Left cardiac atrium (tissue), 4 donors: ENCODE measurements at regions of chr10 and their contacts with region 1.

Region 1: DNA sequence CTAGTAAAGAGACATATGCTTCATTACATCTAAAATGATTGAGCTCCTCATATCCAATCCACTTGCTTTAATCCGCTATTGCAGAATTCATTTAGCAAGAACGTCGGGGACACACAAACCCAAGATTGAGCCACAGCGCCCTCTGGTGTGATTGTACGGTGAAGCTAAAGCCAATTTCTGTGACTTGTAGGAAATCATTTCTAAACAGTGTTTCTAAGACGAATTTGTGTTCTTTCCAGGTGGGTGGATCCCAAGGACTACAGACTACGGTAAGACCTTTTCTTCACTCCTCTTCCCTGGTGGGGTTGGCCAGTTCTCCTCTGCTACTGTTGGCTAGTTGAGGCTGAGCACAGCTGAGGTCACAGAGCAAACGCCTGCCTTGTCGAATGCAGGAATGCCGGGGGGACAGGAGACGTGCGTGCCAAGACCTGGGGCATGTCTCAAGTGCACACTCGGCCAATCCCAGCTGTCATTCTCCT is 5.2 kb downstream of the DMBT1 start:
- DNase-seq: peak; percentile 81
- ATAC-seq: peak; percentile 67 to 76

Region 2: GRCh38 chr10:122298598-122299301 is 267.0 kb before region 1 on chr10:
- intact Hi-C with region 1: loop called (anchors 1 to 10 kb)
- DNase-seq: peak; percentile 73
- ATAC-seq: peak; percentile 77 to 89

Region 3: DNA sequence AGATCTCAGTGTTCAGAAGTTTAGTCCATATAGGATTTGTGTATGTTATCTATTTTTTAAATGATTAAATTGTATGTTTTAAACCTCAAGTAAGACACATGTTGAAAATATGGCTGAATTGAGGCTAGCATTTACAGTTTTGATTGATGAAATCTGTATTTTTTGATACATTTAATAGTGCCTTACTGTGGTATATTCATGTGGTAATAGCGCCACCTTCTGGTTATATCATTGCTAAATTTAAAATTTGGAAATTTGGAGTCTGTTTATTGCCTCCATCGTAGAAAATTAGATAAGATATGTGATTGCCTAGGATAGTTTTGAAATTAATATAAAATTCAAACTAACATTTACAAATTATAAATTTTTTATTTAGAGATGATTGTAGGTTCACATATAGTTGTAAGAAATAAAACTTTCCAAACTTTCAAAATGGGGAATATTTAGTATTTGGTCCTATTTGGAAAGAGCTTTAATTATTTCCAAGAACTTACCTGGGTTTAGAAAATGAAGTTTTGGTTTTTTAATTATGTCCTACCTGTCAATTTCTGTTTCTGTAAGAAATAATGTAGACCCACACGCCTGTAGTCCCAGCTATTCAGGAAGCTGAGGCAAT is 130.4 kb before region 1 on chr10:
- intact Hi-C with region 1: loop called (anchors 10 kb)
- DNase-seq: no peak
- ATAC-seq: peak in 1 of 2 donors; percentile 39

Region 4: DNA sequence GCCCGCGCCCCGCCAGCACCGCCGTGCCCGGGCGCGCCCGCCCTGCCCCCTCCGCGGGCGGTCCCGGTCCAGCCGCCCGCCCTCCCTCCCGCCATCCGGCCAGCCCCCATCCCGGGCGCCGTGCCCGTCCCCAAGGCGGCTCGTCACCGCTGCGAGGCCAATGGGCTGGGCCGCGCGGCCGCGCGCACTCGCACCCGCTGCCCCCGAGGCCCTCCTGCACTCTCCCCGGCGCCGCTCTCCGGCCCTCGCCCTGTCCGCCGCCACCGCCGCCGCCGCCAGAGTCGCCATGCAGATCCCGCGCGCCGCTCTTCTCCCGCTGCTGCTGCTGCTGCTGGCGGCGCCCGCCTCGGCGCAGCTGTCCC is 104.4 kb before region 1 on chr10 and contains the start of gene HTRA1:
- intact Hi-C with region 1: loop called in 1 of 2 experiments (anchors 10 kb)
- DNase-seq: peak; percentile 83
- ATAC-seq: peak; percentile 72 to 86
- total RNA-seq, gene HTRA1: 69.4 to 73.5 TPM

Region 5: GRCh38 chr10:122703439-122704118 is 137.8 kb after region 1 on chr10:
- intact Hi-C with region 1: loop called in 1 of 2 experiments (anchors 10 kb)
- DNase-seq: peak; percentile 70
- ATAC-seq: peak; percentile 93 to 96